Mammary epithelial cell (primary cell): ENCODE measurements at regions of chr13 and their contacts with region 1.

Region 1: GRCh38 chr13:73417015-73417623 is 358.3 kb downstream of the KLF5 start:
- DNase-seq: no peak
- H3K4me3 ChIP-seq: no peak overlapping the region
- H3K27ac ChIP-seq: no peak overlapping the region
- H3K4me1 ChIP-seq: peaks cover 38% of the 10 kb centered on the region
- H3K27me3 ChIP-seq: no peaks in the 10 kb centered on the region
- CTCF ChIP-seq: peak; percentile 38 to 42

Region 2: GRCh38 chr13:72839831-72840426 is 577.2 kb before region 1 on chr13:
- CTCF ChIA-PET with region 1: no interaction called
- dilution Hi-C with region 1: no loop called
- in situ Hi-C with region 1: loop called in 1 of 2 experiments (anchors 25 kb)
- intact Hi-C with region 1: loop called (anchors 1 kb)
- DNase-seq: peak; percentile 69
- H3K4me3 ChIP-seq: no peak overlapping the region
- H3K27ac ChIP-seq: peak overlapping the region; percentile 26
- H3K4me1 ChIP-seq: no peaks in the 10 kb centered on the region
- H3K27me3 ChIP-seq: no peaks in the 10 kb centered on the region
- CTCF ChIP-seq: peak; percentile 79 to 86

Region 3: DNA sequence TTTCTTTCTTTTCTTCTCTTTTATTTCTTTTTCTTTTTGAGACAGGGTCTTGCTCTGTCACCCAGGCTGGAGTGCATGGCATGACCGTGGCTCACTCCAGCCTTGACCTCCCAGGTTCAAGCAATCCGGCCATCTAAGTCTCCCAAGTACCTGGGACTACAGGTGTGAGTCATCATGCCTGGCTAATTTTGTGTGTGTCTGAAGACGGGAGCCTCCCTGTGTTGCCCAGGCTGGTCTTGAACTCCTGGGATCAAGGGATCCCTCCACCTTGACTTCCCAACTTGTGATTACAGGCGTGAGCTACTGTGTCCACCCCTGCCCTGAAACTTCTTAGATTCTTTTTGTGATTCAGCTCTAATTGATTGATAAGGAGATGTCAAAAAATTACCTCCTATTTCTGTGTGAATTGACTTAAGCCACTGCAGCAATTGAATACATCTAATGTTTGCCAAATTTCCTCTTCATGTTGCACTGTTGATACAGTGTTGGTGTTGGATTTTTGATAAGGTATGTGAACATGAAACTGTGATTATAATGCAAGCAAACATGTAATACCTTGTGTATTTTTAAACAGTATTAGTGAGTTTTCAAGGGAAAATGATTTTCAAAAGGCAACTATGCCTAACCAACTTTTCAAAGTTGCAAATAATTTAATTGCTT is 335.7 kb before region 1 on chr13:
- CTCF ChIA-PET with region 1: no interaction called
- dilution Hi-C with region 1: no loop called
- in situ Hi-C with region 1: no loop called
- intact Hi-C with region 1: loop called (anchors 5 kb)
- DNase-seq: peak; percentile 45
- H3K4me3 ChIP-seq: no peak overlapping the region
- H3K27ac ChIP-seq: peak overlapping the region; percentile 11
- H3K4me1 ChIP-seq: peaks cover 8% of the 10 kb centered on the region
- H3K27me3 ChIP-seq: no peaks in the 10 kb centered on the region
- CTCF ChIP-seq: no peak

Region 4: GRCh38 chr13:73228546-73228945 is 188.6 kb before region 1 on chr13:
- CTCF ChIA-PET with region 1: no interaction called
- dilution Hi-C with region 1: no loop called
- in situ Hi-C with region 1: loop called in 1 of 2 experiments (anchors 10 kb)
- intact Hi-C with region 1: loop called (anchors 2 kb)
- DNase-seq: peak; percentile 45
- H3K4me3 ChIP-seq: no peak overlapping the region
- H3K27ac ChIP-seq: peak overlapping the region; percentile 9
- H3K4me1 ChIP-seq: peaks cover 27% of the 10 kb centered on the region
- H3K27me3 ChIP-seq: no peaks in the 10 kb centered on the region
- CTCF ChIP-seq: peak; percentile 25 to 48

Region 5: GRCh38 chr13:73465617-73465971 is 48.5 kb after region 1 on chr13:
- CTCF ChIA-PET with region 1: no interaction called
- dilution Hi-C with region 1: no loop called
- in situ Hi-C with region 1: no loop called
- intact Hi-C with region 1: loop called (anchors 2 kb)
- DNase-seq: peak; percentile 96
- H3K4me3 ChIP-seq: no peak overlapping the region
- H3K27ac ChIP-seq: peak overlapping the region; percentile 94
- H3K4me1 ChIP-seq: peaks cover 31% of the 10 kb centered on the region
- H3K27me3 ChIP-seq: no peaks in the 10 kb centered on the region
- CTCF ChIP-seq: peak; percentile 11 to 34

Region 6: GRCh38 chr13:73544175-73544574 is 127.1 kb after region 1 on chr13:
- CTCF ChIA-PET with region 1: no interaction called
- dilution Hi-C with region 1: no loop called
- in situ Hi-C with region 1: no loop called
- intact Hi-C with region 1: loop called (anchors 5 kb)
- DNase-seq: no peak
- H3K4me3 ChIP-seq: no peak overlapping the region
- H3K27ac ChIP-seq: no peak overlapping the region
- H3K4me1 ChIP-seq: peaks cover 18% of the 10 kb centered on the region
- H3K27me3 ChIP-seq: no peaks in the 10 kb centered on the region
- CTCF ChIP-seq: peak in 1 of 2 donors; percentile 27

Region 7: DNA sequence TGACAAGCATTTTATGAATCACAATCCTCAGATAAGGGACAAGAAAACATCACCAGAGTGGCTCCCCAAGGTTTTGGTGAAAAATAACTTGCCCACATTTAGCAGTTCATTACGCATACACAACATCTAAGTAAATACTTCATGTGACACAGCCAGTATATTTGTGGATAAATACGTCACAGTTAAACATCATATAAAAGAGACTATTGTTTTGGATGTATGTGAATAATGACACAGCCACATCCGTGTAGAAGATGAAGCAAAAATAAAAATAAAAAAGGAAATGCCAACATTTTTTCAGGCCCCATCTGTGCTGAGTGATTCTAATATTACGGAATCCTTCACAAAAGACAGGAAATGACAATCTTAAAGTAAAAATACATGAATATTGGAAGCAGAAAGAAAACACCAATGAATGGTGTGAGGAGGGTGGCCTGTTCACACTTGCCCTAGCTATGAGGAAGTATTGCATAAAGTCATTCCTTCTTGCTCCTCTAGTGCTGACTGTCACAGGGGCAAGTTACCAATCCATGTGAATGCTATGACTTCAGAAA is 260.0 kb after region 1 on chr13:
- CTCF ChIA-PET with region 1: no interaction called
- dilution Hi-C with region 1: no loop called
- in situ Hi-C with region 1: no loop called
- intact Hi-C with region 1: loop called (anchors 5 kb)
- DNase-seq: peak; percentile 95
- H3K4me3 ChIP-seq: no peak overlapping the region
- H3K27ac ChIP-seq: peak overlapping the region; percentile 98
- H3K4me1 ChIP-seq: peaks cover 18% of the 10 kb centered on the region
- H3K27me3 ChIP-seq: no peaks in the 10 kb centered on the region
- CTCF ChIP-seq: no peak